ENCODE measurements at regions of chr5 and their contacts with region 1.

Region 1: DNA sequence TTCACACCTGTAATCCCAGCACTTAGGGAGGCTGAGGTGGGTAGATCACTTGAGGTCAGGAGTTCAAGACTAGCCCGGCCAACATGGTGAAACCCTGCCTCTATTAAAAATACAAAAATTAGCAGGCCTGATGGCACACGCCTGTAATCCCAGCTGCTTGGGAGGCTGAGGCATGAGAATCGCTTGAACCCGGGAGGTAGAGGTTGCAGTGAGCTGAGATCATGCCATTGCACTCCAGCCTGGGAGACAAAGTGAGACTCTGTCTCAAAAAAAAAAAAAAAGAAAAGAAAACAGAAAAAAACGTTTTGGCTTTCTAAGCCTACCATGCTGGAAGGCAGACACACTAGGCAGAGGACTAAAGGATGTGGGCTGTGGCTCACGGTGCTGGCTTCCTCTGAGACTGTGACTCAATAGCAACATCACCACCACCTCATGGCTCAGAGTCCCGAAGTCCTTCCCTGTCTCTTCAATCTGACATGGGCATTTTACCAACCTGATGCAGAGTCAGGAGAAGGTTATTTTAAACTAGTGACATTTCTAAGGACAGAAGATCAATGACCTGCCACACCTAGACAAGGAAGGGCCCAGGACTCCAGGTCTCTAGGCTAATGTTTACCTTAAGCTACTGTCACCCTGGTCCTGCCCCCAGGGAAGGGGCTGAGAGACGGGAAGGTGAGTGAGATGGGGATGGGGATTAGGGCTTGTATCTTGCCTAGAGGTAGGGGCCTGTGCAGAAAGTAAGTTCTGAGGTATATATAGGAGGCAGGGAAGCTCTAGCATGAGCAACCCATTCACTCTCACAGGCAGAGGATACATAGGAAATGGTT is 3.8 kb downstream of the ECSCR start:
- DNase-seq: peak; percentile 58 to 95 (median 77)
- ATAC-seq: peak; percentile 98
- H3K4me3 ChIP-seq: no peak overlapping the region
- H3K4me3 Mint-ChIP-seq: peak overlapping the region; percentile 57
- H3K27ac ChIP-seq: peak overlapping the region in 1 of 2 experiments; percentile 33
- H3K27ac Mint-ChIP-seq: peak overlapping the region; percentile 94
- H3K4me1 ChIP-seq: peaks cover 52% of the 10 kb centered on the region
- H3K4me1 Mint-ChIP-seq: peaks cover 61% of the 10 kb centered on the region
- H3K27me3 ChIP-seq: no peaks in the 10 kb centered on the region
- H3K27me3 Mint-ChIP-seq: no peaks in the 10 kb centered on the region
- CTCF ChIP-seq: no peak

Region 2: GRCh38 chr5:139439013-139439903 is 19.5 kb before region 1 on chr5 and contains the start of gene DNAJC18:
- CTCF ChIA-PET with region 1: interaction called, 3 read pairs
- POLR2A ChIA-PET with region 1: interaction called, 16 read pairs
- intact Hi-C with region 1: loop called in 1 of 2 experiments (anchors 1 kb)
- DNase-seq: peak; percentile 78 to 93 (median 90)
- ATAC-seq: peak; percentile 88
- H3K4me3 ChIP-seq: peak within 1 kb of the TSS; percentile 95 to 98
- H3K4me3 Mint-ChIP-seq: peak within 1 kb of the TSS; percentile 98
- H3K27ac ChIP-seq: peak within 1 kb of the TSS; percentile 97 to 98
- H3K27ac Mint-ChIP-seq: peak within 1 kb of the TSS; percentile 99
- H3K4me1 ChIP-seq: peaks cover 24% of the 10 kb centered on the region
- H3K4me1 Mint-ChIP-seq: peaks cover 33% of the 10 kb centered on the region
- H3K27me3 ChIP-seq: no peaks in the 10 kb centered on the region
- H3K27me3 Mint-ChIP-seq: no peaks in the 10 kb centered on the region
- CTCF ChIP-seq: no peak
- total RNA-seq, gene DNAJC18: 8.0 to 10.2 TPM

Region 3: GRCh38 chr5:139474890-139475791 is 16.3 kb after region 1 on chr5:
- CTCF ChIA-PET with region 1: interaction called, 3 read pairs
- POLR2A ChIA-PET with region 1: interaction called, 6 read pairs
- intact Hi-C with region 1: loop called in 1 of 2 experiments (anchors 2 kb)
- DNase-seq: peak in 3 of 9 experiments; percentile 25 to 60 (median 39)
- ATAC-seq: peak; percentile 66
- H3K4me3 ChIP-seq: no peak overlapping the region
- H3K4me3 Mint-ChIP-seq: peak overlapping the region; percentile 68
- H3K27ac ChIP-seq: peak overlapping the region in 1 of 2 experiments; percentile 36
- H3K27ac Mint-ChIP-seq: peak overlapping the region; percentile 82
- H3K4me1 ChIP-seq: peaks cover 67% of the 10 kb centered on the region
- H3K4me1 Mint-ChIP-seq: peaks cover 66% of the 10 kb centered on the region
- H3K27me3 ChIP-seq: no peaks in the 10 kb centered on the region
- H3K27me3 Mint-ChIP-seq: no peaks in the 10 kb centered on the region
- CTCF ChIP-seq: no peak

Region 4: DNA sequence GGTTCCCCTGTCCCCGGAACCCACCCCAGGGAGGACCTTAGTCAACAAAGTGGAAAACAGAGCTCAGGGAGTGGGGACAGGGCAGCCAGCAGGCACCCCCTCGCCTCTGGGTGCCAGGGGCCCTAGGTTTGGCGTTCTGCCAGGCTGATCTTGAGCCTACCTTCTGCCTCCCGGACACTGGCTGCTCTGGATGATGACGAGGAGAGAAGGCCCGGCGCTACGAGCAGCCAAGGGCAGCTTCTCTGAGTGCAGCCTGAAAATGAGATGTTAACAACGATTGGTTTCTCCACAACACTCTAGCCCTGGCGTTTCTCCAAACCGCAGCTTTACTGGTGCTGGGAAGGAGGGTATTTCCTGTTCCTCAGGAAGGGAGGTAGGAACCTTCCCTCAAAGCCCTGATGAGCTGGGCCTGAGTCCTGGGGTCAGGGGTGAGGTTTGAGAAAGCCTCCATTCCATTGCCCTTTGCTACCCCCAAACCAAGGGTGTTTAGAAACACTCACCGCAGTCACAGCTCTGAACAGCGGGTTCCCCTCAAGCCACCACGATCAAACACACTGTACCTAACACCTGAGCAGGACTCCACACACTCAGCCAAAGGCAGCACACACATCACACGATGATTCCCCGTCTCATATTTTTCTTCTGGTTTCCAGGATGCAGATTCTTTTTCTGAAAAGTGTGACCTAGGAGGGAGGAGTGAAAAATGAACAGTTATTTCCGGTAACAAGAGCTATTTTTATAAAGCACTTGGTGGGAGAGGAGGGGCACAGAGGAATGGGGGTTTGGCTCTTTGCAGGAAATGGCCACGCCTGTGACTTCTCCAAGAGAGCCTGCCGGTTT is 23.5 kb after region 1 on chr5 and contains the start of gene STING1:
- CTCF ChIA-PET with region 1: interaction called, 5 read pairs
- POLR2A ChIA-PET with region 1: interaction called, 13 read pairs
- intact Hi-C with region 1: loop called (anchors 1 kb)
- DNase-seq: peak; percentile 22 to 89 (median 73)
- ATAC-seq: peak; percentile 78
- H3K4me3 ChIP-seq: peak within 1 kb of the TSS; percentile 56 to 61
- H3K4me3 Mint-ChIP-seq: peak within 1 kb of the TSS; percentile 90
- H3K27ac ChIP-seq: peak within 1 kb of the TSS; percentile 58 to 84
- H3K27ac Mint-ChIP-seq: peak within 1 kb of the TSS; percentile 97
- H3K4me1 ChIP-seq: peaks cover 26% of the 10 kb centered on the region
- H3K4me1 Mint-ChIP-seq: peaks cover 34% of the 10 kb centered on the region
- H3K27me3 ChIP-seq: no peaks in the 10 kb centered on the region
- H3K27me3 Mint-ChIP-seq: no peaks in the 10 kb centered on the region
- CTCF ChIP-seq: no peak
- total RNA-seq, gene STING1: 55.0 to 57.8 TPM

Measured in CD8-positive, alpha-beta T cell (primary cell).